Naive thymus-derived CD4-positive, alpha-beta T cell (primary cell): ENCODE measurements at regions of chr2 and their contacts with region 1.

Region 1: GRCh38 chr2:204871231-204871953 is 326.1 kb downstream of the PARD3B start:
- DNase-seq: peak in 6 of 9 donors; percentile 30 to 66 (median 53)
- ATAC-seq: peak; percentile 61
- H3K4me3 ChIP-seq: no peak overlapping the region
- H3K4me3 Mint-ChIP-seq: peak overlapping the region in 5 of 10 donors; percentile 0 to 19 (median 1)
- H3K27ac ChIP-seq: no peak overlapping the region
- H3K27ac Mint-ChIP-seq: peak overlapping the region in 7 of 9 donors; percentile 0 to 44 (median 12)
- H3K4me1 ChIP-seq: peaks cover 0 to 27% of the 10 kb centered on the region in 2 donors
- H3K4me1 Mint-ChIP-seq: peaks cover 15 to 57% (median 44%) of the 10 kb centered on the region in 7 donors
- H3K27me3 ChIP-seq: no peaks in the 10 kb centered on the region
- H3K27me3 Mint-ChIP-seq: peaks cover 0 to 18% (median 0%) of the 10 kb centered on the region in 5 donors

Region 2: DNA sequence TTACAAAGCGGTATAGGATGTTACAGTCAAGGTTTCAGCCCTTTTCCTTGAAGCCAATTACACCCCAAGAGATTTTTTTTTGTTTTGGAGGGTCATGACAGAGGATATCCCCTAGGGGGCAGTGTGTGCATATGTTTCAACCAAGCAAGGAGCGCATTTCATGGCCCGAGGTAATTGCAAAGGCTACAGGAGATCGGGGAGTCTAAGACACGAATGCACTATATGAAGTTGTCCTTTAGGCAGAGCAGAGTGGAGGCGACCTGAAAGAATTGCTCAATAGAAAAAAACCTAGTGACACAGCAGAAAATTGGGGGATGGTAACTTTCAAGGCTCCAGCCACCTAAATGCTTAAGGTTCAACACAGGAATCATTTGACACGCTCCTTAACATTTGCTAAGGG is 545.9 kb before region 1 on chr2:
- CTCF ChIA-PET with region 1: no interaction called
- POLR2A ChIA-PET with region 1: no interaction called
- intact Hi-C with region 1: loop called (anchors 5 to 10 kb)
- DNase-seq: peak; percentile 18 to 80 (median 71)
- ATAC-seq: peak; percentile 83
- H3K4me3 ChIP-seq: no peak overlapping the region
- H3K4me3 Mint-ChIP-seq: peak overlapping the region in 1 of 10 donors; percentile 36
- H3K27ac ChIP-seq: no peak overlapping the region
- H3K27ac Mint-ChIP-seq: peak overlapping the region in 1 of 9 donors; percentile 15
- H3K4me1 ChIP-seq: no peaks in the 10 kb centered on the region
- H3K4me1 Mint-ChIP-seq: peaks cover 0 to 14% (median 4%) of the 10 kb centered on the region in 7 donors
- H3K27me3 ChIP-seq: no peaks in the 10 kb centered on the region
- H3K27me3 Mint-ChIP-seq: peaks cover 5 to 12% (median 7%) of the 10 kb centered on the region in 5 donors

Region 3: GRCh38 chr2:204967199-204967960 is 96.0 kb after region 1 on chr2:
- CTCF ChIA-PET with region 1: interaction called, 8 read pairs
- POLR2A ChIA-PET with region 1: interaction called, 7 read pairs
- intact Hi-C with region 1: loop called (anchors 1 to 5 kb)
- DNase-seq: peak; percentile 10 to 86 (median 83)
- ATAC-seq: peak; percentile 78
- H3K4me3 ChIP-seq: peak overlapping the region; percentile 37
- H3K4me3 Mint-ChIP-seq: peak overlapping the region; percentile 51 to 89 (median 70)
- H3K27ac ChIP-seq: peak overlapping the region; percentile 58
- H3K27ac Mint-ChIP-seq: peak overlapping the region; percentile 91 to 100 (median 98)
- H3K4me1 ChIP-seq: peaks cover 26 to 67% of the 10 kb centered on the region in 2 donors
- H3K4me1 Mint-ChIP-seq: peaks cover 36 to 80% (median 70%) of the 10 kb centered on the region in 7 donors
- H3K27me3 ChIP-seq: no peaks in the 10 kb centered on the region
- H3K27me3 Mint-ChIP-seq: no peaks in the 10 kb centered on the region

Region 4: DNA sequence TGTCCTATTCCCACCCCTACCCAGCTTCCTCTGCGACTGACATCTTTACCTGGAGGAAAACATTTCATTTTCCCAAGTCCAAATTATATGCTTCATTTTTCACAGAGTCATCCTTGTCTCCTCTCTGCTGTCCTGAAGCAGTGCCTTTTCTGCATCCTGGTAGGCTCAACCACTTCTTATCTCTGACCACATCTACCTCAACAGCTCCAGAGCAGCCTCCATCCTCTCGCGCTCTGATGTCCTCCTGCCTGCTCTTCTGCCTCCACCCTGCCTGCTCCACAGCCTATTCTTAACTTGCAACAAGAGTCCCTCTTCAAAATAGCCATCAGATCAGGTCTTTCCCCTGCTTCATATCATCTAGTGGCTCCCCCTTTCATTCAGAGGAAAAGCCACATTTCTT is 131.0 kb after region 1 on chr2:
- CTCF ChIA-PET with region 1: no interaction called
- POLR2A ChIA-PET with region 1: no interaction called
- intact Hi-C with region 1: loop called in 1 of 2 experiments (anchors 5 kb)
- DNase-seq: peak in 4 of 9 donors; percentile 6 to 38 (median 20)
- ATAC-seq: no peak
- H3K4me3 ChIP-seq: no peak overlapping the region
- H3K4me3 Mint-ChIP-seq: peak overlapping the region; percentile 10 to 75 (median 32)
- H3K27ac ChIP-seq: no peak overlapping the region
- H3K27ac Mint-ChIP-seq: peak overlapping the region in 5 of 9 donors; percentile 1 to 74 (median 34)
- H3K4me1 ChIP-seq: peaks cover 0 to 14% of the 10 kb centered on the region in 2 donors
- H3K4me1 Mint-ChIP-seq: peaks cover 18 to 43% (median 36%) of the 10 kb centered on the region in 7 donors
- H3K27me3 ChIP-seq: no peaks in the 10 kb centered on the region
- H3K27me3 Mint-ChIP-seq: no peaks in the 10 kb centered on the region

Region 5: GRCh38 chr2:205077159-205077558 is 205.8 kb after region 1 on chr2:
- CTCF ChIA-PET with region 1: interaction called, 7 read pairs
- POLR2A ChIA-PET with region 1: no interaction called
- intact Hi-C with region 1: loop called (anchors 2 to 5 kb)
- DNase-seq: peak in 7 of 9 donors; percentile 41 to 85 (median 73)
- ATAC-seq: peak; percentile 86
- H3K4me3 ChIP-seq: no peak overlapping the region
- H3K4me3 Mint-ChIP-seq: peak overlapping the region; percentile 38 to 81 (median 70)
- H3K27ac ChIP-seq: peak overlapping the region; percentile 72
- H3K27ac Mint-ChIP-seq: peak overlapping the region; percentile 81 to 99 (median 94)
- H3K4me1 ChIP-seq: peaks cover 0 to 30% of the 10 kb centered on the region in 2 donors
- H3K4me1 Mint-ChIP-seq: peaks cover 23 to 82% (median 73%) of the 10 kb centered on the region in 7 donors
- H3K27me3 ChIP-seq: no peaks in the 10 kb centered on the region
- H3K27me3 Mint-ChIP-seq: no peaks in the 10 kb centered on the region

Region 6: DNA sequence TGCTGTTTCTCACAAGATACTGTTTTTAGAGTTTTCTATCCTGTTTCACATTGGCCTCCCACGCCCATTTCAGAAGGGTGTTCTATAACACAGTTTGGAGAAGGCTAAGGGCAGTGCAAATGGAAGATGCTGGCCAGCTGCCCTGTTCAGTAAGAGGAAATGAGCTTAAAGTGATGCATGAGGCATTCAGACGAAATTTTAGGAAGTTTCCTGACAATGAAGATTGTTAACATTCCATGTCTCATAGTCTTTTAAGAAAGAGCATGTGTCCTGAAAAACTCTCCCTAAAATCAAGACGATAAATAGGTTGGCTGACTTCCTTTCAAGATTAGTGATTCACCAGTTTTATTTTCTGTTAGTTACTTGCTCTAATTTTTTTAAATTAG is 326.7 kb after region 1 on chr2:
- CTCF ChIA-PET with region 1: no interaction called
- POLR2A ChIA-PET with region 1: no interaction called
- intact Hi-C with region 1: loop called (anchors 1 to 10 kb)
- DNase-seq: no peak
- ATAC-seq: no peak
- H3K4me3 ChIP-seq: no peak overlapping the region
- H3K4me3 Mint-ChIP-seq: no peak overlapping the region
- H3K27ac ChIP-seq: no peak overlapping the region
- H3K27ac Mint-ChIP-seq: no peak overlapping the region
- H3K4me1 ChIP-seq: peaks cover 0 to 6% of the 10 kb centered on the region in 2 donors
- H3K4me1 Mint-ChIP-seq: peaks cover 0 to 9% (median 6%) of the 10 kb centered on the region in 7 donors
- H3K27me3 ChIP-seq: no peaks in the 10 kb centered on the region
- H3K27me3 Mint-ChIP-seq: no peaks in the 10 kb centered on the region

Region 7: DNA sequence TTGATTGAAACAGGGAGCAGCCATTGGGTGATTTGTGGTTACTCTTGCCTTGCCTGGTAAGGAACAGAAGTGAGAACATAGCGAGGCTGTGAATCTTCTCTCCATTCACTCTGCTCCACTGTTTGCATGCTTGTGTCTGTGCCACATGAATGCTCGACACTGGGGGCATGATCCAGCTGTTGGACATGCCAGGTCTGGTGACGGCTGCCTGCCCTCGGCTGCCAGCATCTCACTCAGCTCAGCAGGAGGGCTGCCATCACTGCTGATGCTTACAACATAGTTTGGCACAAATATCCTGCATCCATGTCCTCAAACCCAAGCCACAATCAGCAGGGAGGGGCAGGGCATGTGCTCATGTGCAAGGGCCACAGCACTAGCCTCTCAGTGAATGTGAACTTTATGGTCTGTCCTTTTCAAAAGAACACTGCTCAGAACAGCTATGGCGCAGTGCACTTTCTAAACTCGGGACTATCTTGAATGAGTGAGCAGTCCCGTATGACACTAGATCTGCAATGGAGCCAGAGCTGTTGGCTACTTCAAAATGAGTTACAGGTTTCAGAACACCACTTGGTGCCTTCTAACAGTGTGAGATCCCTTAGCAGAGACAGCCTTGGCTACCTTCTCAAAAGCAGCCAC is 937.2 kb after region 1 on chr2:
- CTCF ChIA-PET with region 1: no interaction called
- POLR2A ChIA-PET with region 1: no interaction called
- intact Hi-C with region 1: loop called in 1 of 2 experiments (anchors 2 kb)
- DNase-seq: no peak
- ATAC-seq: no peak
- H3K4me3 ChIP-seq: no peak overlapping the region
- H3K4me3 Mint-ChIP-seq: no peak overlapping the region
- H3K27ac ChIP-seq: no peak overlapping the region
- H3K27ac Mint-ChIP-seq: no peak overlapping the region
- H3K4me1 ChIP-seq: no peaks in the 10 kb centered on the region
- H3K4me1 Mint-ChIP-seq: peaks cover 0 to 1% (median 0%) of the 10 kb centered on the region in 7 donors
- H3K27me3 ChIP-seq: no peaks in the 10 kb centered on the region
- H3K27me3 Mint-ChIP-seq: peaks cover 0 to 8% (median 4%) of the 10 kb centered on the region in 5 donors